Breast epithelium (tissue), 4 donors: ENCODE measurements at regions of chr17 and their contacts with region 1.

Region 1: DNA sequence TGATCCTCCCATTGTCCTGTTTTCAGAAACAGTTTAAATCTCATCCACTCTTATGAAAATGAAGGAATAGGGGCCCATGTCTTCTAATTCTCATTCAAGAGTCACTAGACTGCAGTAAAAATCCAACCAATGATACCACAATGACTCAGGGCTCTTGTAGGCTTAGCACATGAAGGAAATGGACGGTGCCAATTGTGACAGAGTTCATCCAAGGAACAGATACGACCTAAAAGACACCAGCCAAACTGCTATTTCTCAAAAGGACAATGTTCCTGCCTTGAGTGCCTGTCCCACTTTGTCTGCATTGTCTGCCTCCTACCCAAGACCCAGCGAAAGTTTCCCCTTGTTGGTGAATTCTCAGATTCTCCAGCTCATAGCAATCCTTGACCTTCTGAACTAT is 204.8 kb upstream of the COX10 start:
- DNase-seq: no peak
- H3K4me3 ChIP-seq: no peak overlapping the region
- H3K27ac ChIP-seq: no peak overlapping the region
- H3K4me1 ChIP-seq: no peaks in the 10 kb centered on the region
- H3K27me3 ChIP-seq: no peaks in the 10 kb centered on the region
- CTCF ChIP-seq: no peak
- POLR2A ChIP-seq: no peak

Region 2: GRCh38 chr17:13851889-13852288 is 12.7 kb before region 1 on chr17:
- intact Hi-C with region 1: loop called (anchors 1 kb)
- DNase-seq: no peak
- H3K4me3 ChIP-seq: no peak overlapping the region
- H3K27ac ChIP-seq: no peak overlapping the region
- H3K4me1 ChIP-seq: no peaks in the 10 kb centered on the region
- H3K27me3 ChIP-seq: no peaks in the 10 kb centered on the region
- CTCF ChIP-seq: no peak
- POLR2A ChIP-seq: no peak

Region 3: GRCh38 chr17:15321556-15322251 is 1457.2 kb after region 1 on chr17:
- intact Hi-C with region 1: no loop called
- DNase-seq: no peak
- H3K4me3 ChIP-seq: no peak overlapping the region
- H3K27ac ChIP-seq: no peak overlapping the region
- H3K4me1 ChIP-seq: no peaks in the 10 kb centered on the region
- H3K27me3 ChIP-seq: no peaks in the 10 kb centered on the region
- CTCF ChIP-seq: no peak
- POLR2A ChIP-seq: no peak